ENCODE measurements at regions of chr10 and their contacts with region 1.

Region 1: DNA sequence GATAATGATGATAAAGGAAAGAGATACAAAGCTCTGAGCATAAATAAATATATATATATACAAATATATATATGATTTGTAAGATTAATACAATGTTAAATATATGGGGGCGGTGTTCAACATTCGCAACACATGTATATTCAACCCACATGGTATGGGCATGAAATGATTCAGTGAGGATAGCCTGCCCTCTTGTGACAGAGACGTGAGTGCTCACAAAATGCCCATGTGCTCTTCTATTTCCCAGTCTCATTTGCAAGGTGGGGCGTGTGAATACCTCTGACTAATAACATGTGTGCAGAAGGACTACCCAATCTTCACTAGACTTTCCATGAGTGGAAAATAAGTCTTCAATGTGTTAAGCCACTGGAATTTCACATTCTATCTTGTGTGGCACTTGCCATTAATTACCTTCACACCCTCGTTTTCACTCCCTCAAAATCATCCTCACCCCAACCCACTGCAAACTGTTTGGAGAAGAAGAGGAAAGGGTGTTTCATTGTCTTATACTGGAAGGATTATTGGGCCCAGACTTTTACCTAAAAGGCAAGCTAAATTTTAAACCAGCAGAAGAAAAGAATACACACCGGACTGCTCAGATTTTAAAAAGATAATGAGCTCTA is 26.9 kb downstream of the ASAH2 start:
- DNase-seq: no peak
- ATAC-seq: peak in 3 of 8 donors; percentile 56 to 74 (median 62)
- H3K4me3 ChIP-seq: no peak overlapping the region
- H3K27ac ChIP-seq: no peak overlapping the region
- H3K4me1 ChIP-seq: no peaks in the 10 kb centered on the region
- H3K27me3 ChIP-seq: peaks cover 0 to 21% (median 6%) of the 10 kb centered on the region in 7 donors
- CTCF ChIP-seq: peak in 7 of 9 donors; percentile 37 to 60 (median 55)

Region 2: GRCh38 chr10:49592726-49593563 is 631.5 kb before region 1 on chr10:
- intact Hi-C with region 1: loop called in 8 of 10 experiments (anchors 1 to 10 kb)
- DNase-seq: peak; percentile 32 to 47
- ATAC-seq: peak in 7 of 8 donors; percentile 52 to 75 (median 61)
- H3K4me3 ChIP-seq: no peak overlapping the region
- H3K27ac ChIP-seq: no peak overlapping the region
- H3K4me1 ChIP-seq: no peaks in the 10 kb centered on the region
- H3K27me3 ChIP-seq: peaks cover 0 to 29% (median 8%) of the 10 kb centered on the region in 7 donors
- CTCF ChIP-seq: peak; percentile 71 to 96 (median 86)

Region 3: GRCh38 chr10:49598986-49599385 is 625.5 kb before region 1 on chr10:
- intact Hi-C with region 1: loop called in 7 of 10 experiments (anchors 1 to 10 kb)
- DNase-seq: no peak
- ATAC-seq: no peak
- H3K4me3 ChIP-seq: no peak overlapping the region
- H3K27ac ChIP-seq: no peak overlapping the region
- H3K4me1 ChIP-seq: no peaks in the 10 kb centered on the region
- H3K27me3 ChIP-seq: peaks cover 0 to 50% (median 25%) of the 10 kb centered on the region in 7 donors
- CTCF ChIP-seq: no peak